GM23248 (cell line): ENCODE measurements at regions of chr5 and their contacts with region 1.

Region 1: GRCh38 chr5:59193616-59194319 is 610.9 kb downstream of the RAB3C start:
- DNase-seq: peak; percentile 99
- H3K4me3 ChIP-seq: no peak overlapping the region
- H3K27ac ChIP-seq: peak overlapping the region; percentile 87
- H3K4me1 ChIP-seq: peaks cover 10% of the 10 kb centered on the region
- H3K27me3 ChIP-seq: no peaks in the 10 kb centered on the region

Region 2: DNA sequence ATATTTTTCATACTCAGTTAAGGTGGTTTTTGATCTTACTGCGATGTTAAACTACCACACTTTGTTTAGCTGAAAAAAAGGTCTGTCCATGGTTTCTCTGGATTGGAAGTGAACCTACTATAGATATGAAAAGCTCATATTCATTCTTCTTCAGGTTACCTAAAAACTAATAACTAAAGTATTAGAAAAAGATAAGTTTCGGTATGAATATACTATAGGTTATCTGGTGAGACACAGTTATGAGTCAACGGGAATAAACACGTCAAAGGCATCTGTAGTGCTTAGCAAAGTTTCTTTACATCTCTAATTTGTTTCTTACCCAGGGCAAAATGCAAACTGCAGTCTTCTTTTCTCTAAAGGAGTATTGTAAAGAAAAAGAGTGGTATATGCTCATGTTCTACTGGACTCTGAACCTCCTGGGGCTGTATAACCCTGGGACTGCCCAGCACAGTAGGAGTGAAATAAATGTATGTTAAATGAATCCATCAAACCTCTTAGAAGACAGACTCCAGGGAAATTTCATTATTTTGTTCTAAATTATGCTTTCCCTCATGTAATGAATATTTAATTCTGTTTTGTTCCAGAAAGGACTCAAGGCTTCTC is 177.9 kb after region 1 on chr5:
- in situ Hi-C with region 1: loop called (anchors 10 kb)
- DNase-seq: no peak
- H3K4me3 ChIP-seq: no peak overlapping the region
- H3K27ac ChIP-seq: no peak overlapping the region
- H3K4me1 ChIP-seq: no peaks in the 10 kb centered on the region
- H3K27me3 ChIP-seq: peaks cover 63% of the 10 kb centered on the region

Region 3: DNA sequence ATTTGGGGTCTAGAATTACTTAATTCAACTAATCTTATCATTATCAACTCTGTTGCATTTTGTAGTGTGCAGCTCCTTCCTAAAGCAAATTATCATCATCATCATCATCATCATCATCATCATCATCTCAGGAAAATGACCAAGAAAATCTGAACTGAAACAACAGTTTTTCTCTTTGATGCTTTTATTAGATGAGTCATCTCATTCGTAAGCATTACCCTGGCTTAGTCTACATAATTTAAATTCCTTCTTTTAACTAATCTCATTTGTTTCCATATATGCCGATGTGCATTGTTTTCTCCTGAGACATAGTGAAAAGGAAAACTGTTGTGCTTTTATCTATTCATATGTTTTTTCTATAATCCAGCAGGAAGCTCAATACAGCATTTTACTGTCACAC is 872.7 kb after region 1 on chr5:
- in situ Hi-C with region 1: no loop called
- DNase-seq: peak; percentile 4
- H3K4me3 ChIP-seq: no peak overlapping the region
- H3K27ac ChIP-seq: no peak overlapping the region
- H3K4me1 ChIP-seq: peaks cover 4% of the 10 kb centered on the region; the same call in 1 of the 2 replicates
- H3K27me3 ChIP-seq: no peaks in the 10 kb centered on the region